HEK293T (cell line): ENCODE measurements at regions of chr6 and their contacts with region 1.

Region 1: DNA sequence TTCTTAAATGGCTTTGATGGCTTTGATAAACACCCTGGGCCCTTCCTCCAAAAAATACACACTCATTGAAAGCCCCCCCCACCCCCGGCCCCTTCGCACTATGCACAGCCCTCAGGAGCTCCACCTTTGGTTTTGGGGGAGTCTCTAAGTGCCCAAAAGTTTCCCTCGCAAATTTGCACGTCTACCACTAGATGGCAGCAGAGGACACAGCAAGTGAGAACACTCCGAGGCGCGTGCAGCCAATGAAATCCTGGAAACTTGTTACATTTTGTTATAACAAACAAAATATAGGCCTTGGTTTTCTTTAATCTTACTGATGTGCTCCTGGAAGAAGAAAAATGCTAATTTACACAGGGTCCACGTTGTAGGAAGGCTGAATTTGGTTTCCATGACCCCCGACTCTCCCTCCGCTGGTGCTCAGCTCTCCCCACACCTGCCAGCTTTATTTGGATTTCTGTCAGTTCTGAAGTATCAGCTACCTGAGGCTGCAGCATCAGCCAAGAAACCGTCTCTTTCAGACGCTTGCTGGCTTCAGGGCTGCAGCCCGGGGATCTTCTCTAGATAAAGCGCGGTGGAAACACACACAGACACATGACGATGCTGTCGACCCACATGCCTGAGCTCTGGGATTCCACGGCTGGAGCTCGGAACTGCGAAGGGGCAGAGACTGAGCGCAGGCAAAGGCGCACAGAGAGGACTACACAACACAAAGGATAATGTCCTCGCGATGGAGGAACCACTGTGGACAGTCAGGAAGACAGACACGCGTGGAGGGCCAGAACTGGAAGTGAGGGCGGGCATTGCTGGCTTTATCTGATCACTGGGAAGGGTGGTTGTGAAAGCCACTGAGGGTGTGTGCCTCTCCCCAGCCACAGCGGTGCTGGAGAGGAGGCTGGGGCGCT is 148.4 kb upstream of the RPS6KA2 start:
- DNase-seq: peak; percentile 81

Region 2: DNA sequence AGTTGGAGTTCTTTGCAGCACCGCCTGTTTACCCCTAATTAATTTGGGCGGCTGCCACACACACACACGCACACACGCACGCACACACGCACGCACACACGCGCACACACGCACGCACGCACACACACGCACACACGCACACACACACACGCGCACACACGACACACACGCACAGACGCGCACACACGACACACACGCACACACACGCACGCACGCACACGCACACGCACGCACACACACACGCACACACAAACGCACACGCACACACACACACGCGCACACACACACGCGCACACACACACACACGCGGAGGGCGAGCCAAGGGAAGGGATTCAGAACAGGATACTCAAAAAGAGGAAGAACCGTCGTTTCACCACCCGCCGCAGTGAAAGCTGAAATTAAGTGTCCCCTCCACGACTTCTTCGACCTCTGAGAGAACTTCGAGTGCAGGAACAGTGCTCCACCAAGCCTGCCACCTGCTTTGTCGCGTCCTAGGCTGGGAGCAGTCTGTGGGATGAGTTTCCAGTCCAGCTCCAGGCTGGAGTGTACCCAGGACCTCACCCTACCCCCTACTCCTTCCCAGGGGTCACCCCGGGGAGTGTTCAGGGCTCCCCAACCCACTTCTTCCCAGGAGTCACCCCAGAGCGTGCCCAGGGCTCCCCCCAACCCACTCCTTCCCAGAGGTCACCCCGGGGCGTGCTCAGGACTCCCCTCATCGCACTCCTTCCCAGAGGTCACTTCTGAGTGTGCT is 179.9 kb after region 1 on chr6:
- CTCF ChIA-PET with region 1: interaction called, 11 read pairs
- POLR2A ChIA-PET with region 1: no interaction called
- DNase-seq: peak; percentile 43

Region 3: DNA sequence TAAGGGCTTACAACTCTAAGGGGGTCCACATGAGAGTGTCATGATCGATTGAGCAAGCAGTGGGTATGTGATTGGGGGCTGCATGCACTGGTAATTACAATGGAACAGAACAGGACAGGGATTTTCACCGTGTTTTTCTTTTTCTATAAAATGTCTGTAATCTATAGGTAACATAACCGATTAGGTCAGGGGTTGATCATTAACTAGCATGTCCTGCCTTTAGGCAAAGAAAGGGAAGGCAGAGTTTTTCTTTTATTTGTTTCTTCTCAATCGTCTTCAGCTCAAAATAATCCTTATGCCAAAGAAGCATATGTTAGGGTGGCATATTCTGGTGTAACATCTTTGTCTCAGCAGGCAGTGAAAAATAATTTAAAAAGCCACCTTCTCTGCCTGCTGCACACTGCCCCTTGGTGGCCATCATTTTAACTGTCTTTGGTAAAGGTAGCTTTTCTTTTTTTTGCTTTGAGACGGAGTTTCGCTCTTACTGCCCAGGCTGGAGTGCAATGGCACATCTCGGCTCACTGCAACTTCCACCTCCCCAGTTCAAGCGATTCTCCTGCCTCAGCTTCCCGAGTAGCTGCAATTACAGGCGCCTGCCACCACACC is 214.1 kb after region 1 on chr6:
- CTCF ChIA-PET with region 1: interaction called, 13 read pairs
- POLR2A ChIA-PET with region 1: no interaction called
- DNase-seq: no peak

Region 4: GRCh38 chr6:167141667-167142432 is 366.4 kb after region 1 on chr6:
- CTCF ChIA-PET with region 1: interaction called, 20 read pairs
- POLR2A ChIA-PET with region 1: no interaction called
- DNase-seq: peak; percentile 81

Region 5: GRCh38 chr6:167462514-167463312 is 687.3 kb after region 1 on chr6:
- CTCF ChIA-PET with region 1: no interaction called
- POLR2A ChIA-PET with region 1: no interaction called
- DNase-seq: no peak